Activated CD4-positive, alpha-beta T cell treated with anti-CD3 and anti-CD28 coated beads, Interleukin-2, amount 10 ng/mL, durations not matched to agents 24 days and 14 days (primary cell): ENCODE measurements at regions of chr10 and their contacts with region 1.

Region 1: DNA sequence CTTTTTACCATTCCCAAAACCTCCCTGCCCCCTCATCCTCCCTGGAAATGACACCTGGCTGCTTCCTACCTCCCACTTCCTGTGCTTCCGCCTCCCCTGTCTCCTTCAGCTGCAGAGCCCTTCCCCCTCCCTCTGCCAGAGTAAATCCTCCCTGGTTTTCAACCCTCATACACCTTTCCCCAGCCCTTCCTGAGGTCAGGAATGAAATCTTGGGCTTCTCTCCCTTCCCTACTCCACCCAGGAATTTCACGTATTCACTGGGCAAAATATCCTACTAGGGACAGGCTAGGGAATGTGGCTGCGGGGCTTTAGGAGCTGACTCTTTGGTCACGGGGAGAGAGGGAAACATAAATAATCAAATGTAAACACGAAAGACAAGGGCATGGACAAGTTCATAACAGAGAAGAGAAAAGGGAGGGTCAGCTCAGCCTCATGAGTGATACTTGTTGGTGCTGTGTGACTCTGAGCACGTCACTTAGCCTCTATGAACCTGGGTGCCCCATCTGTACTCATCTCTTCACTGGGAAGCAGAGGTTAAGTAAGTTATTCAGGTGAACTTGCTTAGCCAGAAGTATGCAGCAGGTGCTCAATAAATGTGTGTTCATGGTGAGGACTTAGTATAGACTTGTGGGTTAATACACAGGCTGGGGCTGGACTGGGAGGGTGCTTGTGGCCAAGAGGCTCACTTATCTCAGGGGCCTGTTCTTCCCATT is 10.1 kb upstream of the DUSP5 start:
- DNase-seq: no peak
- H3K4me3 Mint-ChIP-seq: no peak overlapping the region
- H3K27ac Mint-ChIP-seq: peak overlapping the region; percentile 10
- H3K4me1 Mint-ChIP-seq: peaks cover 18% of the 10 kb centered on the region
- H3K27me3 Mint-ChIP-seq: no peaks in the 10 kb centered on the region

Region 2: DNA sequence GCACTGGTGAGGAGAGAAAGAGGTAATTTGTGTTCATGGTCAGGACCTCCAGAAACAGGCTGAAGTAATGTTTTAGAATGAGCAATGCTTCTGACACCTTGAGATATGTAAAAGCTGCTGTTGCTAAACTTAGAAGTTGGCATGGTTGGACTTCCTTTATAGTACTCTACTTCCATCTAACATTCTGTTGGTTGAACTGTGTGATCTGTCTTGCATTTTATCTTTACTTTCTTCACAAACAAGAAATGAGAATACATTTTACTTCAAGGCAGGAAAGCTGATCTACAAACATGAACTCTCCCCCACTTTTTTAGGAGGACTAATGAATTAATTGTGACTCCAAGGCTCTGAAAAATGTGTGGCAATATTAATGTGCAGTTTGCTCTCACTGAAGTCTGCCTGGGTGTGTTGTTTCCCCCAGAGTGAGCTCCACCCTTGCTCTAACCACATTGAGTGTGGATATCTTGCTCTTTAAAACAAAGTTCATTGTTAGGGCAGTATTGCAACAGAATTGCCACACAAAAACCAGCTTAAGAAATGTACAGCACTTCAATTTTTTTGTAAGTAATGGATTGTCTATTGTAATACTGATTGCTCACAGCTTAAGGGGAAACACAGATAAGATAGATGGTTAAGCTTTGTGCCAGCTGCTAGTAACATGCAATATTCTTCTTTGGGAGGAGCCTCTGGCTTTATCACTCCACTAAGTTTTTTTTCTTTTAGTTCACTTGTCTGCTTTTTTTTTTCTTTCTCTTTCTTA is 410.8 kb before region 1 on chr10:
- intact Hi-C with region 1: no loop called
- DNase-seq: peak; percentile 82
- H3K4me3 Mint-ChIP-seq: peak overlapping the region; percentile 85
- H3K27ac Mint-ChIP-seq: peak overlapping the region; percentile 95
- H3K4me1 Mint-ChIP-seq: peaks cover 77% of the 10 kb centered on the region
- H3K27me3 Mint-ChIP-seq: no peaks in the 10 kb centered on the region

Region 3: GRCh38 chr10:110471566-110472139 is 15.9 kb before region 1 on chr10:
- intact Hi-C with region 1: loop called (anchors 2 kb)
- DNase-seq: no peak
- H3K4me3 Mint-ChIP-seq: no peak overlapping the region
- H3K27ac Mint-ChIP-seq: no peak overlapping the region
- H3K4me1 Mint-ChIP-seq: no peaks in the 10 kb centered on the region
- H3K27me3 Mint-ChIP-seq: no peaks in the 10 kb centered on the region

Region 4: GRCh38 chr10:110547139-110547761 is 59.7 kb after region 1 on chr10:
- intact Hi-C with region 1: no loop called
- DNase-seq: peak; percentile 77
- H3K4me3 Mint-ChIP-seq: peak overlapping the region; percentile 47
- H3K27ac Mint-ChIP-seq: peak overlapping the region; percentile 10
- H3K4me1 Mint-ChIP-seq: peaks cover 19% of the 10 kb centered on the region
- H3K27me3 Mint-ChIP-seq: peaks cover 28% of the 10 kb centered on the region

Region 5: DNA sequence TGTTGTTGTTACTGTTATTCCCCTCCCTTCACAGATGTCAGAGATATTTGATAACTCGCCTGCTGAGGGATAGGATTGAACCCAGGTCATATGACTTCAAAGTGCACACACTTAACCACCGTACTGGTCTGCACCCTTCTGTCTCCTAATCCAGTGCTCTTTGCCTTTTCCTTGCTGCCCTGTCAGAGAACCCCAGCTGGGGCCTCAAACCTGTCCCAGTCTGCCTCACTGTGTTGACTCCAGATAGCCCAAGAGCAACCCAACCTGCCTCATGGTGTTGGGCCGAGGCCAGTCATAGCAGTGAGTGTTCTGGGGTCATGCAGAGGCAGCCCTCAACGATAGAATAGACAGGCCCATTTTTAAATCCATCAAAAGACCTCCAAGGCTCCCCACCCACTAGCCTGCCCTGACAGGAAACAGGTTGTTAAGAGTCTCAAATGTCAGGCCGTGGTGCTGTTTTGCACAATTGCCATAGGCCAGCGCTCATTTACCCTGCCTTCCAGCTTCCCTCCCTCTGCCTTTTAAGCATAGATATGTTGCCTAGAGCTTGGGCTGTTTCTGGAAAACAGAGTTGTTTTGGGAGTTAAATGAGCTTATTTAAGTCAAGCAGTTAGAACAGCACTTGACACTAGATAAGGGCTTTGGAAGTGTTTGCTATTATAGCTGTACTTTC is 347.2 kb after region 1 on chr10:
- intact Hi-C with region 1: no loop called
- DNase-seq: peak; percentile 71
- H3K4me3 Mint-ChIP-seq: no peak overlapping the region
- H3K27ac Mint-ChIP-seq: peak overlapping the region; percentile 74
- H3K4me1 Mint-ChIP-seq: peaks cover 28% of the 10 kb centered on the region
- H3K27me3 Mint-ChIP-seq: no peaks in the 10 kb centered on the region